ENCODE measurements at regions of chr14 and their contacts with region 1.

Region 1: DNA sequence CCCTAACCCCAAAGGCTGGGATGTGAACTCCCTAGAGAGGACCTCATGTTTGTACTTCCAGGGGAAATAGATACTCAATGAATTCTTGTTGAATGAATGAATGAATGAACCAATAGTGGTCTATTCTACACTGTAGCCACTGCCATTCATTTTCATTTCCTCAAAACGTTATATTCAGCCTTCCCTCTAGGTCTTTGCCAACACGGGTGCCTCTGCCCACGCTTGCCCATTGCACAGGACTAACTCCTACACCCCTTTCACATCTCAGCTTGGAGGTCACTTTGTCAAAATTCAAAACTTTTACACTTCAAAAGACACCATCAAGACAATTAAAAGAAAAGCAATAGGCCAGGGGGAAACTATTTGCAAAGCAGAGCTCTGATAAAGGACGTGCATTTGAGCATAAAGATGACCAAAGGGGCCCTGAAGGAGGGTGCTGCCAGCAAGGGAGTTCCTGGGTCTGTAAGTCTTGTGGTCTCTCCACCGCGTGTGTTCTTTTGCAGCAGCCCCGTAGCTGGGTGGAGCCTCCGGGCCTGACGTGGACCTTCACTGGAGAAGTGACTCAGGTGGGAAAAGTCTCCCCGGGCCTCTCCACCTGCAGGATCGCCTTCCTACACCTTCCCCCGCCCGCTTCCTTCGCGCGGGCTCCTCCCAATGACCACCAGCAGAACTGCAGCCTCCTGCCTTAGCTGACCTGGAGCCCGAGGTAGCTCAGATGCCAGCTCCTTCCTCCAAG is 31.5 kb downstream of the TMEM63C start:
- DNase-seq: peak; percentile 56
- ATAC-seq: peak; percentile 82
- H3K4me3 Mint-ChIP-seq: no peak overlapping the region
- H3K27ac Mint-ChIP-seq: no peak overlapping the region
- H3K4me1 Mint-ChIP-seq: no peaks in the 10 kb centered on the region
- H3K27me3 Mint-ChIP-seq: peaks cover 21% of the 10 kb centered on the region

Region 2: GRCh38 chr14:77097700-77098528 is 115.2 kb before region 1 on chr14 and contains the start of gene CIPC:
- CTCF ChIA-PET with region 1: no interaction called
- POLR2A ChIA-PET with region 1: no interaction called
- DNase-seq: peak; percentile 100
- ATAC-seq: peak; percentile 94
- H3K4me3 Mint-ChIP-seq: peak within 1 kb of the TSS; percentile 84
- H3K27ac Mint-ChIP-seq: peak within 1 kb of the TSS; percentile 93
- H3K4me1 Mint-ChIP-seq: peaks cover 31% of the 10 kb centered on the region
- H3K27me3 Mint-ChIP-seq: peaks cover 4% of the 10 kb centered on the region
- total RNA-seq, gene CIPC: 11.4 to 11.7 TPM

Region 3: DNA sequence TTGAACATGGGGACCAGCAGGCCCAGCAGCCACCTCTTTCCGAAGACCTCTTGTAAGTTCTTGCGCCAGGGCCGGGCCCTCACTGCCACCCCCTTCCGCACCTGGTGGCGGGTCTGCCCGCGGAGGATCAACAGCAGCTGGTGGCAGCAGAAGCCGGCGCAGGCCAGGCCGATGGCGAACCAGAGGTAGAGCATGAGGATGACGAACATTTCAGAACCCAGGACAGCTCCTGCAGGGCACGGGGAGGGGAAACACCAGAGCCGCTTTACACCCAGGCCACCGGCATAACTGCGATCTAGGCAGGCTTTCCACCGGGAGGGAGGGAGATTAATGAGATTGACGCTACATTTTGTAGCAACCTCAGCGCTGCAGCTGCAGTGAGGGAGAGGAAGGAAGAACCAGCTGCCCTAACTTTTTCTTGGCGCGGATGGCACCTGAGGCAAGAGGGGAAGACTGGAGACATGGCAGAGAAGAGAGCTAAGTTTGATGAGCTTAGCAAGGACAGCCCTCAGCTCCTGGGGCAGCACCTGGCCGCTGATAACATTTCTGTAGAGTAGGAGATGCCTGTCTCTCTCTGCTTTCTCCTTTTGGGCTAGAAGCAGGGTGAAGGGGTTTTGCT is 79.3 kb before region 1 on chr14:
- CTCF ChIA-PET with region 1: interaction called, 10 read pairs
- POLR2A ChIA-PET with region 1: no interaction called
- DNase-seq: peak; percentile 83
- ATAC-seq: peak; percentile 94
- H3K4me3 Mint-ChIP-seq: no peak overlapping the region
- H3K27ac Mint-ChIP-seq: no peak overlapping the region
- H3K4me1 Mint-ChIP-seq: peaks cover 4% of the 10 kb centered on the region
- H3K27me3 Mint-ChIP-seq: peaks cover 45% of the 10 kb centered on the region

Measured in activated CD8-positive, alpha-beta T cell treated with anti-CD3 and anti-CD28 coated beads, Interleukin-2, amount 10 ng/mL, durations not matched to agents 7 days and 5 days (primary cell).